ENCODE measurements at regions of chr2 and their contacts with region 1.

Region 1: DNA sequence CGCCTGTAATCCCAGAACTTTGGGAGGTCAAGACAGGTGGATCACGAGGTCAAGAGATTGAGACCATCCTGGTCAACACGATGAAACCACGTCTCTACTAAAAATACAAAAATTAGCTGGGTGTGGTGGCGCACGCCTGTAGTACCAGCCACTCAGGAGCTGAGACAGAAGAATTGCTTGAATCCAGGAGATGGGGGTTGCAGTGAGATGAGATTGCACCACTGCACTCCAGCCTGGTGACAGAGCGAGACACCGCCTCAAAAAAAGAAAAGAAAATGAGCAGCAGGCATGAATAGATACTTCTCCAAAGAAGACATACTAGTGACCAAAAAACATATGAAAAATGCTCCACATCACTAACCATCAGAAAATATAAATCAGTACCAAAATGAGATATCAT is 138.6 kb downstream of the DNAH7 start:
- DNase-seq: no peak
- H3K4me3 ChIP-seq: no peak overlapping the region
- H3K27ac ChIP-seq: no peak overlapping the region
- H3K4me1 ChIP-seq: no peaks in the 10 kb centered on the region
- H3K27me3 ChIP-seq: no peaks in the 10 kb centered on the region
- CTCF ChIP-seq: no peak

Region 2: DNA sequence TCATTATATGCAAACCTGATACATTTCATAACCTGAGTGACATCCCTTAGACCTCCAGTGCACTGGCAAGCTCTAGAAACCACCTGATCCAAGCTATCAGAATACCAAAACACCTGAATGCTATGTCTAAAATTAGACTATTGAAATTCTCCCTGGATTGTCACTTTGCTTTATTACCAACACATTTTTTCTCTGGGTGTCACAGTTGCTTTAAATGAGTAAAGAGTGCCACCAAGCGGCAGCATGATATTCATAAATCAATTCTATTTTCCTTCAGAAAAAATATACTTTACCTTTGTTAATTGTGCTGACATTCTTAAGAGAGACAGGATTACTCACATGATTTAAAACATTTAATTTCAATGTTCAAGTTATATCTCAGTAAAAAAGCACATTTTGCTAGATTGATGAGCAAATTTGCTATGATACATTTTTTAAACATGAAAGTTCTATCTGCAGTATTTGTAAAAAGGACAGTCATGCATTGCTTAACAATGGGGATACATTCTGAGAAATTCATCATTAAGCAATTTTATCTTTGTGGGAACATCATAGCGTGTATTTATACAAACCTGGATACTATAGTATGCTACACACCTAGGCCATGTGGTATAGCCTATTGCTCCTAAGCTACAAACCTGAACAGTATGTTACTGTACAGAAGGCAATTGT is 611.5 kb before region 1 on chr2:
- CTCF ChIA-PET with region 1: no interaction called
- POLR2A ChIA-PET with region 1: no interaction called
- intact Hi-C with region 1: loop called (anchors 10 kb)
- DNase-seq: peak; percentile 19 to 37
- H3K4me3 ChIP-seq: no peak overlapping the region
- H3K27ac ChIP-seq: no peak overlapping the region
- H3K4me1 ChIP-seq: no peaks in the 10 kb centered on the region
- H3K27me3 ChIP-seq: no peaks in the 10 kb centered on the region
- CTCF ChIP-seq: peak; percentile 75

Measured in PC-9 (cell line).